Mammary epithelial cell (primary cell): ENCODE measurements at regions of chr10 and their contacts with region 1.

Region 1: DNA sequence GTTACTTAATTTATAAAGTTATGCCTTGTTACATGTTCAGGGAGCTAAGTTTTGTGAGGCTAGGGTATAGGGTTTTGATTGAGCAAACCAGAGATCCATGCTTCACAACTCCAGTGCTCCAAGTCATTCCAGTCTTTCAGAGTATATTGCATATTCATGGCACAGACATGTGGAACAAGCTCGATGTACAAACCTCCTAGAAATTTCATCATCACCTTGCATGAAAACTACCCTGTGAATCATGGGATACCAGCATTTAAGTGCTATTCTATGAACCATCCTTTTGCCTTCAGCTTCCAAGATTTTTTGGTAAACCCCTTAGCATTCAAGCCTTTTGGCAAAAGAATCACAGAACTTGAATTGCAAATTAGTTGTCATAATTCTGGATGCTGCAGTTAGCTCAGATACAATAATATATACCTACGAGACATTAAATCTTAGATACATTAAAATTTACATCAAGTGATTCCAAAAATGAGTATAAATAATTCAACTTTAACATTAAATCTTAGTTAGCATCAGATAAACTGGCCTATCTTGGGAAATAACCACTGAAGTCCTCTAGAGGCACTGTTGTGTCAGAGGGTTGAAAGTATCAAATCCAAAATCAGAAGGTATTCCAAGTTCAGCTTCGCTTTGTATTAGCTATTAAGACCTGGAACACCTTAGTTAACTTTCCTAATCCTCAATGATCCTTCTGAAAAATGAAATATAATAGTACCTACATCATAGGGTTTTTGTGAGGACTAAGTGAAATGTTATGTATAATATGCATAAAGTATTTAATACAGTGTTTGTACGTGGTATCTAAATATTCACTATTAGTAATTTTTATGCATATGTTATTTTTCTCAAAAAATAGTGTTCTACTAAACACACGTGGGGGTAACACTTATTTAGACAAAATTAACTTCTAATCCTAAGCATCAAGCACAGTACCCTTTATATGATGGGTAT is 55.5 kb upstream of the CABCOCO1 start:
- DNase-seq: no peak
- H3K4me3 ChIP-seq: no peak overlapping the region
- H3K27ac ChIP-seq: no peak overlapping the region
- H3K4me1 ChIP-seq: no peaks in the 10 kb centered on the region
- H3K27me3 ChIP-seq: no peaks in the 10 kb centered on the region
- CTCF ChIP-seq: peak; percentile 64 to 70

Region 2: DNA sequence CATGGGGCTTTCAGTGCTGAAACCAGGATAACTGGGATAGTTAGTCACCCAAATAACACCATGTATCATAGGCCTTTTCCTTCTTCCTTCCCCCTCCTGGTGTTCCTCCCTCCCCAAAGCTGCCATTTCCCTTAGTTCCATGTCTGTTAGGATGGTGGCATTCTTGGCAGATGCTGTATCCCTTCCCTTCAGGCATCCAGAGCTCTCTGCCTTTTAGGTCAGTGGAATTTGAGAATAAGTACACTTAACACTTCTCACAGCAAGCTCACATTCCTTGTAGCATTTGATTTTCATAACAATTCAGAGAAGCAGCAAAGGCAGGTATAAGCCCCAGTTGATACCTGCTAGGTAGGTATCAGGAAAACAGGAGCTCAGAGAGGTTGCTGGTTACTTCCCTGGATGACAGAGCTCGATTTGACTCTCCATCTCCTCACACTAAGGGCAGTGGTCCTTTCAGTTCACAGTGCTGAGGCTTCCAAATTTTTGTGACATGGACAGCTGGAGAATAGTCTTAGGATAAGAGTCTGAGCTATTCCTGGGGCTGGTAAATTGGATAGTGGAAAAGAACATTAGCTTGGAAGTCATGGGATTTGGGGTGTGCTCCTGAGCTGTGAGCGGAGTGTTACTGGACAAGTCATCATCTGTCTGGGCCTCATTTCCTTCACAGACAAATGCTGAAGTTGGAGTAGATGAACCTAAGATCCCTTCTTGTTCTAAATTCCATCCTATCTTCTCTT is 554.6 kb before region 1 on chr10:
- CTCF ChIA-PET with region 1: no interaction called
- dilution Hi-C with region 1: no loop called
- in situ Hi-C with region 1: no loop called
- intact Hi-C with region 1: no loop called
- DNase-seq: no peak
- H3K4me3 ChIP-seq: no peak overlapping the region
- H3K27ac ChIP-seq: no peak overlapping the region
- H3K4me1 ChIP-seq: no peaks in the 10 kb centered on the region
- H3K27me3 ChIP-seq: no peaks in the 10 kb centered on the region
- CTCF ChIP-seq: no peak

Region 3: GRCh38 chr10:61301575-61301974 is 305.7 kb before region 1 on chr10:
- CTCF ChIA-PET with region 1: no interaction called
- dilution Hi-C with region 1: no loop called
- in situ Hi-C with region 1: no loop called
- intact Hi-C with region 1: no loop called
- DNase-seq: no peak
- H3K4me3 ChIP-seq: no peak overlapping the region
- H3K27ac ChIP-seq: no peak overlapping the region
- H3K4me1 ChIP-seq: no peaks in the 10 kb centered on the region
- H3K27me3 ChIP-seq: no peaks in the 10 kb centered on the region
- CTCF ChIP-seq: no peak

Region 4: DNA sequence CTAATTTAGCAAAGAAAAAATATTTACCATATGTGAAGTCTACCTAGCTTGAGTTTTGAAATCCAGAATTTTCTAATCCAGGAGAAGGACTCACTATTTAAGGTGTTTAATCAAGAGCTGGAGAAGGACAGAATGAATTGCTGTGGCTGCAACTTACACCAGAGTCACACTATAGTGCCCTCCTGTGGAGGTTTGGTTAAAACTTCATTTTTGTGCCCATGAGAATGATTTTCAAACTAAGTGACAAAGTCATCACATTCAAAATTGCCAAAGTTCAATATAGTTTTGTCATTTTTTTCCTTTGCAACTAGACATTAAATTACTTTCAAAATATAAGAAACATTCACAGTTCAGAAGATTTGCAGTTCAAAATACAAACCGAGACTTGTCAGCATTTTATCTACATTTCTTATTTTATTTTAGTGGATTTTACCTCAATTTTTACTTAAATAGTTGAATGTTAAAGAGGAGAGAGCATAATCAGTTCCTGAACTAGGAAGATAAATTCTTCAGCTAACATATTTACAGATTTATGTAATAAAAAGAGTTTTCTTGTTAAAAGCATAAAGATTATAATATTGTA is 126.2 kb after region 1 on chr10:
- CTCF ChIA-PET with region 1: no interaction called
- dilution Hi-C with region 1: no loop called
- in situ Hi-C with region 1: loop called in 1 of 2 experiments (anchors 25 kb)
- intact Hi-C with region 1: loop called (anchors 5 kb)
- DNase-seq: peak; percentile 19
- H3K4me3 ChIP-seq: no peak overlapping the region
- H3K27ac ChIP-seq: no peak overlapping the region
- H3K4me1 ChIP-seq: no peaks in the 10 kb centered on the region
- H3K27me3 ChIP-seq: peaks cover 2% of the 10 kb centered on the region
- CTCF ChIP-seq: peak; percentile 55 to 65